ENCODE measurements at regions of chr1 and their contacts with region 1.

Region 1: GRCh38 chr1:161117759-161118581 is at the starts of genes NIT1 and PFDN2:
- DNase-seq: peak; percentile 84
- H3K4me3 Mint-ChIP-seq: peak within 1 kb of the TSS; percentile 93
- H3K27ac Mint-ChIP-seq: peak within 1 kb of the TSS; percentile 96
- H3K4me1 Mint-ChIP-seq: peaks cover 51% of the 10 kb centered on the region
- H3K27me3 Mint-ChIP-seq: no peaks in the 10 kb centered on the region
- total RNA-seq, gene NIT1: 47.5 and 48.5 TPM in 2 replicates
- total RNA-seq, gene PFDN2: 138 and 139 TPM in 2 replicates

Region 2: DNA sequence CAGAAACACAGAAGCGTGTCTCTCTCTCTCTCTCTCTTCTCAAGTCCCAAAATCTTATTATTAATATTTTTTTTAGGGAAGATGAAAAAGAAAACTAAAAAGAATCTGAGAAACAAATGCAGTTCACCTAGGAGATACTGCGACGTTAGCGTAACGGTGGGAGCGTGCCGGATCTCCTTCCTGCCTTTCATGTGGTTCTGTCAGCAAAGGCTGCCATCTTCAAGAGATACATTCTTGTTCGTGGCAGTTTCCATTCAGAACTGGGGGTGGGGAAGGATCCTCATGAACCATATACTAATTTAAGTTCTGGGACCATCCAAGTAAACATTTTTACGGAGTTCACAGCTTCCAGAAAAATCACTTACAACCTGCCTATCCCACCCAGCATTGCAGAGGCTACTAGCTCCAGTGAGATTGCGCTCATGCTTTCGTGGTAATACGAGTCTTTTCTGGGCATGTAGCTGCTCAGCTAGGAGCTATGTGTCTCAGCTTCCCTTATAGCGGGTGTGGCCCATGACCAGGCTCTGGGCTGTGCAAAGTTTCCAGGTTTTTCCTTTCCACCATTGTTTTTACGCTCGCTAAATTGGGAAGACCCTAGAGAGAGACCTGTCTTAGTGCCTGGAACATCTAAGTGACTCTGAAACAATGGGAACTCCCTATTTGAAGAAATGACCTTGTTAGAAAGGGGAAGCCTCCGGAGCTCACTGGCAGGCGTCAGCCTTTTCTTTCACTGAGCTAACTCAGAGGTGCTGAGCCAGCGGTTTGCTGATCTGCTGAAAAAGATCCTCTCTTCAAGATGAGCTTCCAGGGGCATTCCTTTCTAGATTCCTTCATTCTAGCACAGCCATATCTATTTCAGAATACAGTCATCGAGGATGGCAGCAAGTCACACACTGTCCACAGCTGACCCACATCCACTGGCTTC is 488.4 kb before region 1 on chr1:
- intact Hi-C with region 1: loop called (anchors 10 kb)
- DNase-seq: peak; percentile 73
- H3K4me3 Mint-ChIP-seq: peak overlapping the region; percentile 20
- H3K27ac Mint-ChIP-seq: peak overlapping the region; percentile 100
- H3K4me1 Mint-ChIP-seq: peaks cover 95% of the 10 kb centered on the region
- H3K27me3 Mint-ChIP-seq: no peaks in the 10 kb centered on the region

Region 3: DNA sequence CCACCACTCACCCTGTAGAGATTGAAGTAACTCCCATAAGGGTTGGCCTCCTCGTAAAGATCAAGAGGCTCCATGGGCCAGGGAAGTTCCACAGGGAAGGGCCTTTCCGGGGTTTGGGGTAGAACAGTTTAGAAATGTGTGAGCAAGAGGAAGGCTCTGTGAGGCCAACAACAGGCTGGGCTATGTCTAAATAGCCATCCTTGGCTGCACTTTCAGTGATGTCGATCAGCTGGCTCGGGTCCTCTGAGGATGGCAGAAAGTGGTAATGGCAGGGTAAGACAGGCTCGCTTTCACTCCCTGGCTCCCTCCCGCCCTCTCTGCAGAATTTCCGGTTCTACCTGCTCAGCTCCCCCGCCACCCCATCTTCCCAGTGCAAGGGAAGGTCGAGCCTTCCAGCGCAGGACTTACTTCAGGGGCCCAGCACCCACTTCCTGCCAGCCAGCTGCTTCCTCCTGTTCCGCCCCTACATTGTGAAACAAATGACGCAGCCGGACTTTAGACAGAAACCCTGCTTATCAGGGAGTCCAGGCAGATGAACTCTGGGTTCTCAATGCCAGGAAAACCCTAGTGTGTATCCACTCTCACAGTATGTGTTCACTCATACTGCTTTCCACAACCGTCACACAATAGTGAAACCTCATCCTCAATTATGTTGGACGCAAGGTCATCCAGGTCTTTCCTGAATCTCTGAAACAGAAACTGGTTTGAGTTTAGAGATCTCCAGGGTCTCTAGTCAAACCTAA is 104.3 kb before region 1 on chr1:
- intact Hi-C with region 1: loop called (anchors 5 kb)
- DNase-seq: peak; percentile 62
- H3K4me3 Mint-ChIP-seq: peak overlapping the region; percentile 74
- H3K27ac Mint-ChIP-seq: peak overlapping the region; percentile 96
- H3K4me1 Mint-ChIP-seq: peaks cover 37% of the 10 kb centered on the region
- H3K27me3 Mint-ChIP-seq: no peaks in the 10 kb centered on the region

Region 4: GRCh38 chr1:161071886-161072371 is 46.0 kb before region 1 on chr1:
- intact Hi-C with region 1: loop called (anchors 2 kb)
- DNase-seq: no peak
- H3K4me3 Mint-ChIP-seq: no peak overlapping the region
- H3K27ac Mint-ChIP-seq: no peak overlapping the region
- H3K4me1 Mint-ChIP-seq: peaks cover 29% of the 10 kb centered on the region
- H3K27me3 Mint-ChIP-seq: no peaks in the 10 kb centered on the region

Region 5: GRCh38 chr1:161132410-161133219 is 14.6 kb after region 1 on chr1 and contains the start of gene DEDD:
- intact Hi-C with region 1: loop called (anchors 1 kb)
- DNase-seq: peak; percentile 89
- H3K4me3 Mint-ChIP-seq: no peak within 1 kb of the TSS
- H3K27ac Mint-ChIP-seq: no peak within 1 kb of the TSS
- H3K4me1 Mint-ChIP-seq: peaks cover 35% of the 10 kb centered on the region
- H3K27me3 Mint-ChIP-seq: no peaks in the 10 kb centered on the region
- total RNA-seq, gene DEDD: 37.5 and 40.3 TPM in 2 replicates

Region 6: DNA sequence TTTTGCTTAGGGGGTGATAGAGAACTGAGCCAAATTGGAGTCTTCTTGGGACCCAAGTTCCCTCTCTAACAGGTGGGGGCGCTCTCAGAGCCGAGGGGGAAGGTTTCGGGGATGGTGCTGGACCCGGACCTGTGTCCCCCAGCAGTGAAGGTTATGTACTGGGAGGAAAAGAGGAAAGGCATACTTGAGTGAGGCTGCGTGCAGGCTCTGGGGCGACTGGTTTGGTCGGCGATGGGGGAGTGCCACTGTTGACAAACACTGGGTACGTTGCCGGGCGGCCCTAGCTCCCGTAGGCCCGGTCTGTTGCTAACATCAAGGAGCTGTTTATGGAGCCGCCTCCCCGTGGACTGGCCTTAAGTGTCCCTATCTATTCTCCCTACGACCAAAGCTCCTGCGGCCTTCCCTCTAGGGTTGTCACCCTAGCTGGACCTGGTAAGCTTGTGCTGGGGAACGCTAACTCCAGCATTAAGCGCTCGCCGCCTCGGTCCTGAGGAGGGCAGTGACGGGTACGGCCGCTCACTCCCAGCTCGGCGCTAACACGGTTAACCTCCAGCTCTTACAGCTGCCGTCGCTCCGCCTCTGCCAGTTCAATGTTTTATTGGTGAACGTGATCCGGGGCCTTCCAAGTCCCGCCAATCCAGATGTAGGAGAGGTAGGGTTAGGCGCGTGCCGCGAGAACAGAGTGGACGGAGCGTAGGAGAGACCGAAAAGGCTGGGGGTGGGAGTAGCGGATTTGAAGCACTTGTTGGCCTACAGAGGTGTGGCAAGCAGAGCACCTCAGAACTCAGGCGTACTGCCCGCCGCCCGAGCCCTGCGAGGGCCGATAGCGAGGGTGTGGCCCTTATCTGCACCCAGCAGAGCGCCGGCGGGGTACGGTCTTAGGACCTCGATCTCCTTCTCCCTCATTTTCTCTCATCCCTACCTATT is 48.0 kb after region 1 on chr1 and contains the start of gene PPOX:
- intact Hi-C with region 1: loop called (anchors 5 kb)
- DNase-seq: peak; percentile 95
- H3K4me3 Mint-ChIP-seq: peak within 1 kb of the TSS; percentile 92
- H3K27ac Mint-ChIP-seq: peak within 1 kb of the TSS; percentile 96
- H3K4me1 Mint-ChIP-seq: peaks cover 36% of the 10 kb centered on the region
- H3K27me3 Mint-ChIP-seq: no peaks in the 10 kb centered on the region
- total RNA-seq, gene PPOX: 35.6 and 36.5 TPM in 2 replicates

Measured in activated T-helper 2 cell treated with anti-CD3 and anti-CD28 coated beads, Interferon-gamma antibody, Interleukin-2, Interleukin-4, amounts not matched to agents 10 μg/mL and 5 μg/mL and 100 μg/mL, durations not matched to agents 14 hours and 24 hours and 36 hours (primary cell).